Endothelial cell of umbilical vein (primary cell): ENCODE measurements at regions of chr3 and their contacts with region 1.

Region 1: DNA sequence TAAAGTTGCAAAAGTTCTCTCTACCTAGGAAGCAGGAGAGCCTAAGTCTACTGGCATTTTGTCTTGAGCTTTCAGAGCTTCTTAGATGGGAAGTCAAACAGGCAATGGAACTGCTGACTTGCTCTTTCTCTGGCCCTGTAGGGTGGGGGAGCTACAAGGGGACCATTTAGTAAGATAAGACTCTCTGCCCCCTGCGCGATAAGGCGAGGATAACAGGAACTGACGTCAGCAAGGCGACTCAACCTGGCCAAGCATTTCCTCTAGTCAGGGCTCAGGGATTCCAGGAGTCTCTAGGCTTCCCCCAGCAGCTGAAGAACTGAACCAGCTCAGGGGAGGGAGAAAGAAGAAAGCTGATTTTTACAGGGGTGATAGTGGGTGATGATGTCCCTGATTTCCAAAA is 5.8 kb downstream of the RARB start:
- DNase-seq: peak; percentile 95
- H3K4me3 ChIP-seq: peak overlapping the region in 1 of 3 experiments; percentile 14
- H3K27ac ChIP-seq: peak overlapping the region; percentile 96
- H3K4me1 ChIP-seq: peaks cover 41% of the 10 kb centered on the region
- H3K27me3 ChIP-seq: no peaks in the 10 kb centered on the region
- CTCF ChIP-seq: no peak
- POLR2A ChIP-seq: no peak

Region 2: GRCh38 chr3:25782938-25783660 is 349.2 kb after region 1 on chr3 and contains the start of gene NGLY1:
- CTCF ChIA-PET with region 1: no interaction called
- POLR2A ChIA-PET with region 1: interaction called, 12 read pairs
- dilution Hi-C with region 1: no loop called
- intact Hi-C with region 1: loop called (anchors 5 kb)
- DNase-seq: peak; percentile 81
- H3K4me3 ChIP-seq: peak within 1 kb of the TSS; percentile 57 to 98 (median 81)
- H3K27ac ChIP-seq: peak within 1 kb of the TSS; percentile 47
- H3K4me1 ChIP-seq: peaks cover 13% of the 10 kb centered on the region
- H3K27me3 ChIP-seq: no peaks in the 10 kb centered on the region
- CTCF ChIP-seq: peak in 1 of 2 donors; percentile 5
- POLR2A ChIP-seq: peak; percentile 89
- total RNA-seq, gene NGLY1: 29.6 and 31.5 TPM in 2 replicates